ENCODE measurements at regions of chr5 and their contacts with region 1.

Region 1: DNA sequence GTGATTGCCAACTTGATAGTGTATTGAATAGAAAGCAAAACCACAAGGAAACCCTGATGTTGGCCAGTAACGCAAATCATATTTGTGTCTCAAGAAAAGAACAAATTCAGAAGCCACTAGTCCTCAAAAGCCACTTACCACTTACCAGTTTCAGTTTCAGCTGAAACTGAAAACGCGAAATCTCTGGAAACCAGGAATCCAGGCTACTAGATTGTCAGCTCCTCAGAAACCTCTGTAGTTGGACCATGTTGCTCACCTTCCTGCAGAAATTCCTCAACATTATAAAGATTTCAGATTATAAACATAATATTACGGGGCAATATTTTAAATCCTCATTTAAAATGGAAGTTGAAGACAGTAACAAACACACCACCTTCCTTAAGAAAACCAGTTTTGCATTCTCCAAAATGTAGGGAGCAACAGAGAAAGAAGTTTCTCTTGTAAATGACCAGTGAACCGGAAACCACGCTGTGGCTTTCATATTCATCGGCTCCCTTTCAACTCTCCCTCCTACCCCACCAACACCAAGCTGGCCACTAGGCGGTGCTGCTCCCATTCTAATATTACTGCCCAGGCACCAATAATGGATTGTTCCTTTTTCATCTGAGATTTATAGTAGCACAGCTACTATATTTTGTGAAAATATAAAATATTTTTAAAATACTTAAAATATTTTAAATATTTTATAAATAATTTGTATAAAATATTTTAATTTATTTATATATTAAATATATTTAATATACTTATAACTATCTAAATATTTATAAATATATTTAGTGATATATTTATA is 8.7 kb upstream of the TMED7 start:
- DNase-seq: peak; percentile 91
- ATAC-seq: peak; percentile 52
- H3K4me3 Mint-ChIP-seq: no peak overlapping the region
- H3K27ac Mint-ChIP-seq: no peak overlapping the region
- H3K4me1 Mint-ChIP-seq: peaks cover 37% of the 10 kb centered on the region
- H3K27me3 Mint-ChIP-seq: peaks cover 26% of the 10 kb centered on the region

Region 2: GRCh38 chr5:115770466-115770865 is 135.9 kb after region 1 on chr5:
- CTCF ChIA-PET with region 1: no interaction called
- POLR2A ChIA-PET with region 1: no interaction called
- intact Hi-C with region 1: loop called in 1 of 2 experiments (anchors 5 kb)
- DNase-seq: peak; percentile 47
- ATAC-seq: no peak
- H3K4me3 Mint-ChIP-seq: no peak overlapping the region
- H3K27ac Mint-ChIP-seq: no peak overlapping the region
- H3K4me1 Mint-ChIP-seq: no peaks in the 10 kb centered on the region
- H3K27me3 Mint-ChIP-seq: peaks cover 14% of the 10 kb centered on the region

Region 3: DNA sequence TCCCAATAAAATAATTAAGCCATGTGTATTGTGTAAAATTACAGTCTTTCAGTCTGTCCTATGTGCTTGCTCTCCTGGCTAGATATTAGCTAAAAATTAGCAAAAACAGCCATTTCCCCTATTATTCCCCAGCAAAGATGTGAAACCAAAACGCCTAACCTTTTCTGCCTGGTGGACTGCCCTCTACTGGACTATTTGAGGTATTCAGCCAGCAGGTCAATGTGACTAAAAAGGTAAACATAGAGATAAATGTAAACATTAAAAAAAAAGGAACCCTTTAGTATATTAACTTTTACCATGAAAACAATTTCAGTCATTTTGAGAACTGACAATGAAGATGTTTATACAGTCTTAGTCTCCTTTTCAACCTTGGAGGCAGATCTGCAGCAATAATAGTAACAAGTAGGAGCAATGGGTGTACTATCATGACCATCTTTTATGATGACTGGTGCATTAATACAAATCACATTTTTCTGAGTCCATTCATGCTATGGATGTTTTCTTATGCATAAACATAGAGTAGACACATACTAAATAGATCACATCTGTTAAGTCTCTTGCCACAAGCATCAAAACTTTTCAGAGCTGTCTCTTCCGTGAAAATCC is 196.7 kb after region 1 on chr5:
- CTCF ChIA-PET with region 1: interaction called, 11 read pairs
- POLR2A ChIA-PET with region 1: no interaction called
- intact Hi-C with region 1: loop called in 1 of 2 experiments (anchors 2 kb)
- DNase-seq: peak; percentile 30
- ATAC-seq: peak; percentile 60
- H3K4me3 Mint-ChIP-seq: no peak overlapping the region
- H3K27ac Mint-ChIP-seq: no peak overlapping the region
- H3K4me1 Mint-ChIP-seq: peaks cover 4% of the 10 kb centered on the region
- H3K27me3 Mint-ChIP-seq: no peaks in the 10 kb centered on the region

Region 4: GRCh38 chr5:116068028-116068632 is 433.6 kb after region 1 on chr5:
- CTCF ChIA-PET with region 1: interaction called, 7 read pairs
- POLR2A ChIA-PET with region 1: no interaction called
- intact Hi-C with region 1: loop called (anchors 1 kb)
- DNase-seq: no peak
- ATAC-seq: peak; percentile 44
- H3K4me3 Mint-ChIP-seq: no peak overlapping the region
- H3K27ac Mint-ChIP-seq: no peak overlapping the region
- H3K4me1 Mint-ChIP-seq: no peaks in the 10 kb centered on the region
- H3K27me3 Mint-ChIP-seq: peaks cover 25% of the 10 kb centered on the region

Region 5: DNA sequence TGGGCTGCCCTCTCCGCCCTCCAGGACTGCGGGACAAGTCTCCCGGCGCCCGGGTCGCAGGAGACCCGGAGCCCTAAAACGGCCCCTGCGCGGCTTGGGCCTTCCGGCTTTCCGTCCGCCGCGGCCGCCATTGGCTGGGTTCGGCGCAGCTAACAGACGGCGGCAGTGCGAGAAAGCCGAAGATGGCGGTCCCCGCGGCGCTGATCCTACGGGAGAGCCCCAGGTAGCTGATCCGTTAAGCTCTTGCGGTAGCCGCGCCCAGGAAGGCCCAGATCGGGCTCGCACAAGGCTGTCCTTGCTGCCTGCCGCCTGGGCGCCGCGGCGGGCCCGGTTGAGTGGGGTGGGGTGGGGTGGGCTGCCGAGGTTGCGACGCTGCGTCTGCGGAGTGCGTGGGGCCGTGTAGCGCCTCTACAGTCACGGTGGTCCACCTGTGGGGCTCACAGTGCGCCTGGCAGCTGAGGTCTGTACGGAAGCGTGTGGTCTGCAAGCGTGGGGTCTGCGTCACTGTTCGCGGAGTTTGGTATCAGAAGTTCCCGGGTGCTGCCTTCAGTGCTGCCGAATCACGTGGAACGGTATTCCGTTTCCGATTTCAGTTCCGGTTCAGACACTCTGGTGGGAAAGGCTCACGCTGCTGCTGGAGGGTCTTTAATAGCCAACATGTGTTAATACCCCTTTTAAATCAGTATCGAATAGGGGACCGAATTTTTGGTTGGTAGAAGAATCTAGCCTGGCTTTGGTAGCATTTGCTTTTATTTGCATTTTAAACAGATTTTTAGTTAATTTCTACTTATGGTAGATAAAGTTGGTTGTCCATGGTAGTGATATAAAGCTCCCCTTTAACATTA is 450.6 kb after region 1 on chr5 and contains the start of gene COMMD10:
- CTCF ChIA-PET with region 1: no interaction called
- POLR2A ChIA-PET with region 1: no interaction called
- intact Hi-C with region 1: loop called in 1 of 2 experiments (anchors 5 kb)
- DNase-seq: peak; percentile 86
- ATAC-seq: peak; percentile 87
- H3K4me3 Mint-ChIP-seq: peak within 1 kb of the TSS; percentile 88
- H3K27ac Mint-ChIP-seq: peak within 1 kb of the TSS; percentile 94
- H3K4me1 Mint-ChIP-seq: peaks cover 50% of the 10 kb centered on the region
- H3K27me3 Mint-ChIP-seq: no peaks in the 10 kb centered on the region
- total RNA-seq, gene COMMD10: 19.7 to 23.0 TPM